CD8-positive, alpha-beta T cell (primary cell): ENCODE measurements at regions of chr22 and their contacts with region 1.

Region 1: GRCh38 chr22:41857155-41857859 is 24.4 kb downstream of the SREBF2 start:
- DNase-seq: peak; percentile 31 to 91 (median 72)
- ATAC-seq: peak; percentile 70
- H3K4me3 ChIP-seq: no peak overlapping the region
- H3K4me3 Mint-ChIP-seq: no peak overlapping the region
- H3K27ac ChIP-seq: peak overlapping the region; percentile 20 to 67
- H3K27ac Mint-ChIP-seq: peak overlapping the region; percentile 84
- H3K4me1 ChIP-seq: peaks cover 30% of the 10 kb centered on the region
- H3K4me1 Mint-ChIP-seq: peaks cover 59% of the 10 kb centered on the region
- H3K27me3 ChIP-seq: no peaks in the 10 kb centered on the region
- H3K27me3 Mint-ChIP-seq: no peaks in the 10 kb centered on the region
- CTCF ChIP-seq: peak; percentile 76

Region 2: GRCh38 chr22:41746567-41747400 is 110.5 kb before region 1 on chr22:
- CTCF ChIA-PET with region 1: interaction called, 43 read pairs
- POLR2A ChIA-PET with region 1: no interaction called
- intact Hi-C with region 1: loop called (anchors 1 to 2 kb)
- DNase-seq: peak; percentile 3 to 78 (median 55)
- ATAC-seq: peak; percentile 71
- H3K4me3 ChIP-seq: no peak overlapping the region
- H3K4me3 Mint-ChIP-seq: no peak overlapping the region
- H3K27ac ChIP-seq: no peak overlapping the region
- H3K27ac Mint-ChIP-seq: no peak overlapping the region
- H3K4me1 ChIP-seq: no peaks in the 10 kb centered on the region
- H3K4me1 Mint-ChIP-seq: peaks cover 4% of the 10 kb centered on the region
- H3K27me3 ChIP-seq: no peaks in the 10 kb centered on the region
- H3K27me3 Mint-ChIP-seq: peaks cover 13% of the 10 kb centered on the region
- CTCF ChIP-seq: peak; percentile 43

Region 3: GRCh38 chr22:41780746-41781505 is 76.4 kb before region 1 on chr22:
- CTCF ChIA-PET with region 1: interaction called, 4 read pairs
- POLR2A ChIA-PET with region 1: interaction called, 9 read pairs
- intact Hi-C with region 1: loop called in 1 of 2 experiments (anchors 1 kb)
- DNase-seq: peak; percentile 77 to 99 (median 90)
- ATAC-seq: peak; percentile 92
- H3K4me3 ChIP-seq: peak overlapping the region; percentile 64 to 69
- H3K4me3 Mint-ChIP-seq: peak overlapping the region; percentile 89
- H3K27ac ChIP-seq: peak overlapping the region; percentile 86
- H3K27ac Mint-ChIP-seq: peak overlapping the region; percentile 99
- H3K4me1 ChIP-seq: peaks cover 32% of the 10 kb centered on the region
- H3K4me1 Mint-ChIP-seq: peaks cover 57% of the 10 kb centered on the region
- H3K27me3 ChIP-seq: no peaks in the 10 kb centered on the region
- H3K27me3 Mint-ChIP-seq: no peaks in the 10 kb centered on the region
- CTCF ChIP-seq: no peak

Region 4: GRCh38 chr22:41822317-41823060 is 34.8 kb before region 1 on chr22:
- CTCF ChIA-PET with region 1: interaction called, 18 read pairs
- POLR2A ChIA-PET with region 1: no interaction called
- intact Hi-C with region 1: loop called (anchors 1 kb)
- DNase-seq: peak in 5 of 9 experiments; percentile 21 to 88 (median 48)
- ATAC-seq: peak; percentile 95
- H3K4me3 ChIP-seq: no peak overlapping the region
- H3K4me3 Mint-ChIP-seq: no peak overlapping the region
- H3K27ac ChIP-seq: no peak overlapping the region
- H3K27ac Mint-ChIP-seq: peak overlapping the region; percentile 72
- H3K4me1 ChIP-seq: no peaks in the 10 kb centered on the region
- H3K4me1 Mint-ChIP-seq: peaks cover 8% of the 10 kb centered on the region
- H3K27me3 ChIP-seq: no peaks in the 10 kb centered on the region
- H3K27me3 Mint-ChIP-seq: no peaks in the 10 kb centered on the region
- CTCF ChIP-seq: peak; percentile 57

Region 5: DNA sequence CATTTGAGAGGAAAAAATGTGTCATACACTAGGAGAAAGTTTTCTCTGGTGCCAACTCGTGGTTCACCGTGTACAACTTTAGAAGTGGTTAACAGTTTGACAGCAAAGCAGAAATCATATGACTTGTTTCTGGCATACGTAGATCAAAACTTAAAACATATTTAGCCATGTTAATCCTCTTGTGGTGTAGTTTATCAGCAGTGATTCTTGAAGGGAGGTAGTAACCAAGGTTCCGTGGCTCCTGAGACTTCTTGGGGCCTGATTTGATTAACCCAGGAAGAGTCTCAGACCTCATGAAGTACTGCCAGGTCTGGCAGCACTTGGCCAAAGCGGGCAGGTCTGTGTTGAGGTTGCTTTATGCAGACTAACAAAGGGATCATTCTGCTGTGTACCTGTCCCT is 16.1 kb after region 1 on chr22:
- CTCF ChIA-PET with region 1: interaction called, 4 read pairs
- POLR2A ChIA-PET with region 1: interaction called, 3 read pairs
- intact Hi-C with region 1: loop called (anchors 1 kb)
- DNase-seq: peak in 4 of 9 experiments; percentile 33 to 84 (median 67)
- ATAC-seq: peak; percentile 88
- H3K4me3 ChIP-seq: no peak overlapping the region
- H3K4me3 Mint-ChIP-seq: no peak overlapping the region
- H3K27ac ChIP-seq: peak overlapping the region; percentile 38 to 62
- H3K27ac Mint-ChIP-seq: peak overlapping the region; percentile 94
- H3K4me1 ChIP-seq: peaks cover 19% of the 10 kb centered on the region
- H3K4me1 Mint-ChIP-seq: peaks cover 28% of the 10 kb centered on the region
- H3K27me3 ChIP-seq: no peaks in the 10 kb centered on the region
- H3K27me3 Mint-ChIP-seq: no peaks in the 10 kb centered on the region
- CTCF ChIP-seq: no peak

Region 6: GRCh38 chr22:41925655-41926460 is 68.6 kb after region 1 on chr22:
- CTCF ChIA-PET with region 1: interaction called, 10 read pairs
- POLR2A ChIA-PET with region 1: interaction called, 3 read pairs
- intact Hi-C with region 1: no loop called
- DNase-seq: peak; percentile 61 to 86 (median 80)
- ATAC-seq: peak; percentile 75
- H3K4me3 ChIP-seq: peak overlapping the region; percentile 43 to 57
- H3K4me3 Mint-ChIP-seq: peak overlapping the region; percentile 85
- H3K27ac ChIP-seq: no peak overlapping the region
- H3K27ac Mint-ChIP-seq: peak overlapping the region; percentile 69
- H3K4me1 ChIP-seq: peaks cover 18% of the 10 kb centered on the region
- H3K4me1 Mint-ChIP-seq: peaks cover 25% of the 10 kb centered on the region
- H3K27me3 ChIP-seq: peaks cover 0 to 3% of the 10 kb centered on the region in 2 experiments
- H3K27me3 Mint-ChIP-seq: no peaks in the 10 kb centered on the region
- CTCF ChIP-seq: peak; percentile 88